ENCODE measurements at regions of chr19 and their contacts with region 1.

Region 1: GRCh38 chr19:38402967-38403861 is at the start of gene FAM98C:
- DNase-seq: peak; percentile 99
- total RNA-seq, gene FAM98C: 14.2 TPM

Region 2: DNA sequence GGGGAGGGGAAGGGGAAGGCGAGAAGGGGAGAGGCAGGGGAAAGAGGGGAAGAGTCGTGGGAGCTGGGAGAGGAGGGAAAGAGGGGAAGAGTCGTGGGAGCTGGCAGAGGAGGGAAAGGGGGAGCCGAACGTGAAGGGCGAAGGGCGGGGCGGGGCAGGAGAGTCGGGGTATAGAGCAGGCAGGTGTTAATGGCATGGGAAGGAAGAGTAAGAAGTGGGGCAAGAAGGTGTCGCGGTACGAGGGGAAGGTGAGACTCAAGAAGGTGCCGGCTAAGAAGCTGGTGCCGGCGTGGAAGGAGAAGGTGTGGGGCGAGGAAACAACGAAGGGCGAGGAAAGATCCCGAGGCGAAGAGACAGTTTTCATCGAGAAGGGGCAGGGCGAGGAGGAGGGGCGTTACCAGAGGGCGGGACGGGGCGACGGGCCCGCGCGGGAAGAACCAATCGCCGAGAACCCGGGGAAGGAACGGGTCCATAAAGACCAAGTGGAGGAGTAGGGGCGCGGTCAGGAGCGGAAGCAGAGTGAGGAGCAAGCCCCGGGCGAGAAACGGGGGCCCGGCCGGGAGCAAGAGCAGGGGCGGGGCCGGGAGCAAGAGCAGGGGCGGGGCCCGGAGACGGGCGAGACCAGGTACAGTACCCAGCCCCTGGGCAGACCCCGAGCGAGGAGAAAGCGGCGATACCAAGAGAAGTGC is 67.1 kb before region 1 on chr19:
- intact Hi-C with region 1: no loop called
- DNase-seq: peak; percentile 97

Region 3: GRCh38 chr19:38374429-38375176 is 28.6 kb before region 1 on chr19 and contains the start of gene PSMD8:
- intact Hi-C with region 1: loop called (anchors 2 kb)
- DNase-seq: peak; percentile 100
- total RNA-seq, gene PSMD8: 283 TPM

Region 4: GRCh38 chr19:38514812-38515633 is 111.8 kb after region 1 on chr19:
- intact Hi-C with region 1: no loop called
- DNase-seq: peak; percentile 85